WTC11 (cell line): ENCODE measurements at regions of chr1 and their contacts with region 1.

Region 1: GRCh38 chr1:15788624-15789301 is 18.7 kb downstream of the UQCRHL start:
- DNase-seq: no peak
- ATAC-seq: no peak
- H3K4me3 Mint-ChIP-seq: no peak overlapping the region
- H3K27ac Mint-ChIP-seq: peak overlapping the region; percentile 1; the same call in 1 of the 2 replicates
- H3K4me1 Mint-ChIP-seq: no peaks in the 10 kb centered on the region; the same call in 1 of the 2 replicates
- H3K27me3 Mint-ChIP-seq: no peaks in the 10 kb centered on the region
- CTCF ChIP-seq: no peak

Region 2: DNA sequence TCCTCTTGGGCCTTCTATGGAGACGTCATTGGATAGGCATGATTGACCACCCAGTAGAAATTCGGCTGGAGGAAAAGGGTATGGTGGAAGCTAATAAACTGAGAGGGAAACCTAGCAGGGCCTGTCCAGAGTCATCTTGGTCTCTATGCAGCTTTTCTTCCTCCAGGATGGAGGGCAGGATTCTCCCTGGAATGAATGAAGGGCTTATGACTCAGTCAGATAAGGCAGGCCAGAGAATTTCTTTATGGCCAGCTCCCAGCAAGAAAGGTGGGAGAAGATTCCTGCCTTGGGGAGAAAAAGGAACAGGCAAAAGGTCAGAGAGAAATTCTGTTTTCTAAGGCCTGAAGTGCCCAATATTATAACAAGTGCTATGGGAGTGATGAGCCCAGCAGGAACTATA is 13.1 kb before region 1 on chr1:
- CTCF ChIA-PET with region 1: interaction called, 13 read pairs
- POLR2A ChIA-PET with region 1: interaction called, 5 read pairs
- DNase-seq: no peak
- ATAC-seq: no peak
- H3K4me3 Mint-ChIP-seq: no peak overlapping the region
- H3K27ac Mint-ChIP-seq: no peak overlapping the region
- H3K4me1 Mint-ChIP-seq: no peaks in the 10 kb centered on the region
- H3K27me3 Mint-ChIP-seq: no peaks in the 10 kb centered on the region
- CTCF ChIP-seq: no peak

Region 3: GRCh38 chr1:15835741-15836510 is 47.2 kb after region 1 on chr1:
- CTCF ChIA-PET with region 1: interaction called, 12 read pairs
- POLR2A ChIA-PET with region 1: interaction called, 5 read pairs
- DNase-seq: peak; percentile 92
- ATAC-seq: peak; percentile 50
- H3K4me3 Mint-ChIP-seq: peak overlapping the region; percentile 81
- H3K27ac Mint-ChIP-seq: peak overlapping the region; percentile 99
- H3K4me1 Mint-ChIP-seq: peaks cover 33% of the 10 kb centered on the region
- H3K27me3 Mint-ChIP-seq: no peaks in the 10 kb centered on the region; the same call in 1 of the 2 replicates
- CTCF ChIP-seq: no peak

Region 4: GRCh38 chr1:15923241-15923640 is 134.5 kb after region 1 on chr1:
- CTCF ChIA-PET with region 1: interaction called, 14 read pairs
- POLR2A ChIA-PET with region 1: no interaction called
- DNase-seq: no peak
- ATAC-seq: no peak
- H3K4me3 Mint-ChIP-seq: no peak overlapping the region
- H3K27ac Mint-ChIP-seq: no peak overlapping the region
- H3K4me1 Mint-ChIP-seq: peaks cover 9% of the 10 kb centered on the region; the same call in 1 of the 2 replicates
- H3K27me3 Mint-ChIP-seq: no peaks in the 10 kb centered on the region
- CTCF ChIP-seq: no peak

Region 5: DNA sequence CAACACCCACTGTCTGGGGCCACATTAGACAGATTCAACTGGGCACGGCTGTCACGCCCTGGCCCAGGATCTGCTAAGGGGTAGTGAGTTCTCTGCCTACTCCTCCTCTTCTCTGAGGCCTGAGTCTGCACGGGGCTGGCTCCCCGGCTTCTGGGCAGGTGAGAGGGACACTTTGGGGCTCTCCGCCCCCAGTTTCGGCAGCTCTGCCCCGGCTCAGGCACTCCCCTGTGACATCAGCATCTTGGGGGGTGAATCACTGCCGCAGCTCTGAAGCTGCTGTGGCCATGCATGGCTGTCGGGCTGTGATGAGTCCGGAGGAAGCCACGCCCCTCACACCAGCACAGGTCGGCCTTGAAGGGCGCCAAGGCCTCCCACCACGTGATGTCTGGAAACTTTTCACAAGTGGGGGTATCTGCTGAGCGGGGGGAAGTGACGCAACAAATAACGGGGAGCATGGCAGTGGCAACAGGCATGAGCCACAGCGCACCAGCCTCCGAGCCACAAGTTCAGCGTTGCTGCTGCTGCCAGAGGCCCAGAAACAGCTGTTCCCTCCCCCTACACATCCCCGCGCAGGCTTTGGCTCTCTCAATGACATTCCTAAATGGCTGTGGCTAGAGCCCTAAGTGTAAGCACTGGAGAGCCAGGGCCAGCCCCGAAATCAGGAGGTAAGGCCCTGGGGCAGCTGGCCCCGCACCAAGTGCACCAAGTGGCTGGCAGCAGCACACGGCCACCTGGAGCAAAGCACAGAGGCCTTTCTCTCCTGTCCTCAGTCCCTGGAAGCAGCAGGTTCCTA is 160.9 kb after region 1 on chr1:
- CTCF ChIA-PET with region 1: interaction called, 26 read pairs
- POLR2A ChIA-PET with region 1: no interaction called
- DNase-seq: peak; percentile 55
- ATAC-seq: peak; percentile 52
- H3K4me3 Mint-ChIP-seq: no peak overlapping the region
- H3K27ac Mint-ChIP-seq: peak overlapping the region; percentile 87
- H3K4me1 Mint-ChIP-seq: peaks cover 63% of the 10 kb centered on the region
- H3K27me3 Mint-ChIP-seq: no peaks in the 10 kb centered on the region
- CTCF ChIP-seq: no peak

Region 6: DNA sequence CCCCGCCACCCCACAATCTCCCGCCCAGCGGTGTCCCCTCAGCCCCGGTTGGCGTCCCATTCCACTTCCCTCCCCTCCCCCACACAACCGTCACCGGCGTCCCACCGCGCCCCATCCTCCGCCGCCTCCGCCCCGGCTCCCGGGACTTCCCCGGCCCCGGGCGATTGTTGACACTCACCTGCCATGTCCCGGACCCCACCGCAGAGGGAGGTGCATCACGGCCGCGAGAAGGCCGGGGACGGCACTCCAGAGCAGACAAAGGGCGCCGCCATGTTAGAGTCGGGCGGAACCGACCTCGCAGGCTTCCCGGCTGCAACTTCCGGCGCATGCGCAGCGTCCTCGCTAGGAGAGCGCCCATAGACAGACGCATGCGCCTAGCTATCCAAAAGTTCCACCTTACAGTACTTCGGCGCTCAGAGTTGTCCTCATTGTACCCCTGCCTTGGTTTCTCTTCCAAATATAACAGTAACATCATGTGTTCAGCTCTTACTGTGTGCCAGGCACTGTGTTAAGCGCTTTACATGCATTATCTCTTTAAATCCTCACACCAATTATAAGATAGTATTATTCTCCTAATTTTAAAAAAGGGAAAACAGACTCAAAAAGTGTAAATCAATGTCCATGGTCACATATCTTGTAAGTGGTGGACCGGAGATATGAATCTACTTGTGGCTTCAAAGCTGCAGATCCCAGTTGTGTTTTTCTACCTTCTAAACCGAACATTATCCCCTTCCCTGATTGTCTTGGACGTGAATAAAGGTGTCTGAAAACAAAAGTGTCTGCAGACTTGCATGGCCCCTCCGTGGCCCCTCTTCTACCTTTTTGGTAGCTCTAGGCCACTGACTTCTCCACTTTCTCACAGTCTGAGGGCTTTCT is 187.3 kb after region 1 on chr1 and contains the start of gene ZBTB17:
- CTCF ChIA-PET with region 1: interaction called, 13 read pairs
- POLR2A ChIA-PET with region 1: no interaction called
- DNase-seq: peak; percentile 96
- ATAC-seq: peak; percentile 90
- H3K4me3 Mint-ChIP-seq: peak within 1 kb of the TSS; percentile 89
- H3K27ac Mint-ChIP-seq: peak within 1 kb of the TSS; percentile 85
- H3K4me1 Mint-ChIP-seq: peaks cover 12% of the 10 kb centered on the region
- H3K27me3 Mint-ChIP-seq: no peaks in the 10 kb centered on the region; the same call in 1 of the 2 replicates
- CTCF ChIP-seq: no peak
- total RNA-seq, gene ZBTB17: 27.6 to 32.0 TPM (median 27.9 TPM) in 3 replicates

Region 7: DNA sequence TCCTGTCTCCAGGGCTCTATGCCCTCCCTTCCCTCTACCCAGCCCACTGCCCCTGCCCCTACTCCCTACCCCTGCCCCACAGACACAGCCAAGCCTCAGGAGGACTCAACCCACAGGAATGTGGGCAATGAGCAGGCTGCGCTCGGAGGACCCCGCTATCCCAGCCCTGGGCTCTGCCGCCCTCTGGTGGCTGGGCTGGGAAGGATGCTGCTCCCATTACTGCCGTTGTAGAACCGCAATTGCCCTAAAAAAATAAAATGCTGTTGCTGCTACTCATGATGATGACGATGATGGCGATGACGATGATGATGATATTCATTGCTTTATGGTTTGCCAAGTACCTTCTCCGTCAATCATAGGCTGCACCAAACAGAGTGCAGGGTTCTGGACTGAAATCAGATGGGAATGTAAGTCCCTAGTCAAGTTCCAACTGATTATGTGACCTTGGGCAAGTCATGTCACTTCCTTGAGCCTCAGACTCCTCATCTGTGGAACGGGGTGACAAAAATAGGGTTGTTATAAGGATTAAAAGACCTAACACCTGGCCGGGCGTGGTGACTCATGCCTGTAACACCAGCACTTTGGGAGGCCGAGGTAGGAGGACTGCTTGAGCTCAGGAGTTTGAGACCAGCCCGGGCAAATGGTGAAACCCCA is 399.1 kb after region 1 on chr1:
- CTCF ChIA-PET with region 1: no interaction called
- POLR2A ChIA-PET with region 1: no interaction called
- DNase-seq: peak; percentile 85
- ATAC-seq: peak; percentile 84
- H3K4me3 Mint-ChIP-seq: no peak overlapping the region
- H3K27ac Mint-ChIP-seq: no peak overlapping the region
- H3K4me1 Mint-ChIP-seq: no peaks in the 10 kb centered on the region
- H3K27me3 Mint-ChIP-seq: no peaks in the 10 kb centered on the region; the same call in 1 of the 2 replicates
- CTCF ChIP-seq: peak; percentile 90